Psoas muscle (tissue), 8 donors: ENCODE measurements at regions of chr1 and their contacts with region 1.

Region 1: GRCh38 chr1:19113697-19114092 is 96.4 kb downstream of the UBR4 start:
- DNase-seq: no peak
- ATAC-seq: peak in 1 of 4 donors; percentile 22
- H3K4me3 ChIP-seq: no peak overlapping the region
- H3K27ac ChIP-seq: no peak overlapping the region
- H3K4me1 ChIP-seq: no peaks in the 10 kb centered on the region
- H3K27me3 ChIP-seq: no peaks in the 10 kb centered on the region
- CTCF ChIP-seq: peak; percentile 26

Region 2: GRCh38 chr1:19033861-19034680 is 79.6 kb before region 1 on chr1:
- intact Hi-C with region 1: no loop called
- DNase-seq: no peak
- ATAC-seq: no peak
- H3K4me3 ChIP-seq: no peak overlapping the region
- H3K27ac ChIP-seq: no peak overlapping the region
- H3K4me1 ChIP-seq: no peaks in the 10 kb centered on the region
- H3K27me3 ChIP-seq: peaks cover 0 to 8% (median 2%) of the 10 kb centered on the region in 3 donors
- CTCF ChIP-seq: no peak

Region 3: GRCh38 chr1:19139711-19140110 is 26.0 kb after region 1 on chr1:
- intact Hi-C with region 1: loop called in 1 of 2 experiments (anchors 5 kb)
- DNase-seq: no peak
- ATAC-seq: no peak
- H3K4me3 ChIP-seq: no peak overlapping the region
- H3K27ac ChIP-seq: no peak overlapping the region
- H3K4me1 ChIP-seq: no peaks in the 10 kb centered on the region
- H3K27me3 ChIP-seq: no peaks in the 10 kb centered on the region
- CTCF ChIP-seq: no peak

Region 4: DNA sequence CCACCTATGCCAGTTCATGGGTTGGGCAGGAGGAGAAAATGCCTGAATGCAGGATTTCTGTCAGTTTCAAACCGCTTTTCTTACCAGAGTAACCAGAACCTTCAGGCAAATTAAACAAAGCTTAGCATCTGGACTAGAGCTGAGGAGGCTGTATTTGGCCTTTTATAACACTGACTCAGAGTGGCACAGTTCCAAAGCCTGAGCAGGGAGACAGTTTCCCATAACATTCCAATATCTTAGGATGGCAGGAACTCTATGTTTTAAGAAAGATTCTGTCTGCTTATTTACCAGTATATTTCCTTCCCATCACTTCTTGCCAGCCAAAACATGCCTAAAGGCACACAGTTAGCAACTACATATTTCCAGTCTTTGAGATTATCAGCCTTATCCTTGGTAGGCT is 49.6 kb after region 1 on chr1:
- intact Hi-C with region 1: loop called (anchors 5 kb)
- DNase-seq: no peak
- ATAC-seq: no peak
- H3K4me3 ChIP-seq: no peak overlapping the region
- H3K27ac ChIP-seq: no peak overlapping the region
- H3K4me1 ChIP-seq: no peaks in the 10 kb centered on the region
- H3K27me3 ChIP-seq: no peaks in the 10 kb centered on the region
- CTCF ChIP-seq: no peak

Region 5: GRCh38 chr1:19191781-19192180 is 78.1 kb after region 1 on chr1:
- intact Hi-C with region 1: loop called in 1 of 2 experiments (anchors 5 kb)
- DNase-seq: no peak
- ATAC-seq: no peak
- H3K4me3 ChIP-seq: no peak overlapping the region
- H3K27ac ChIP-seq: no peak overlapping the region
- H3K4me1 ChIP-seq: no peaks in the 10 kb centered on the region
- H3K27me3 ChIP-seq: no peaks in the 10 kb centered on the region
- CTCF ChIP-seq: no peak